ENCODE measurements at regions of chr11 and their contacts with region 1.

Region 1: GRCh38 chr11:85854557-85855340 is 434 bp upstream of the CCDC83 start:
- DNase-seq: peak; percentile 94
- ATAC-seq: peak; percentile 95
- H3K4me3 Mint-ChIP-seq: peak overlapping the region; percentile 90
- H3K27ac Mint-ChIP-seq: peak overlapping the region; percentile 93
- H3K4me1 Mint-ChIP-seq: peaks cover 16% of the 10 kb centered on the region
- H3K27me3 Mint-ChIP-seq: no peaks in the 10 kb centered on the region

Region 2: DNA sequence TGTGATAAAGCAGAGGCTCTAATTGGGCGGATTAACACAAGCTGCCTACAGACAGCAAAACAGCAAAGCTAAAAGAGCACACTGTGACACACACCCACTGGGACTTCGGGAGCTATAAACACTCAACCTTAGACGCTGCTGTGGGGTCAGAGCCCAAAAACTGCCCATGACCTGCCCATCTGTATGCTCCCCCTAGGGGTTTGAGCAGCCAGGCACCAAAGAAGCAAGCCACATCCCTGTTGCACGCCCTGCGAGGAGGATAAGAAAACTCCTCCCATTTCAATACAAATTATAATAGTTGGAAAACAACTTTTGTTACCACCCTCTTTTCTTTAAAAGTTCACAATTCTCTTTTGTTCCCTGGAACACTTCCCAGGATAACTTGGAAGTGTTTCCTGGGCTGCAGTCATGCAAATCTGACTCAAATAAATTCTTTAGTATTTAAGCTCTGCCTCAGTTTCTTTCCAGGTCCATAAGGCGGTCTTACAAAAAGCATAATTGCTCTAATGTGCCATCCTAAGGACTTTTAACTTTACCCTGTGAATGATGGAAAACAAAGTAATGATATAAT is 314.0 kb before region 1 on chr11:
- CTCF ChIA-PET with region 1: no interaction called
- DNase-seq: no peak
- ATAC-seq: no peak
- H3K4me3 Mint-ChIP-seq: no peak overlapping the region
- H3K27ac Mint-ChIP-seq: no peak overlapping the region
- H3K4me1 Mint-ChIP-seq: no peaks in the 10 kb centered on the region
- H3K27me3 Mint-ChIP-seq: peaks cover 3% of the 10 kb centered on the region

Region 3: GRCh38 chr11:85664615-85665481 is 189.9 kb before region 1 on chr11 and contains the start of gene CREBZF:
- CTCF ChIA-PET with region 1: interaction called, 12 read pairs
- DNase-seq: peak; percentile 96
- ATAC-seq: peak; percentile 74
- H3K4me3 Mint-ChIP-seq: peak within 1 kb of the TSS; percentile 97
- H3K27ac Mint-ChIP-seq: peak within 1 kb of the TSS; percentile 99
- H3K4me1 Mint-ChIP-seq: peaks cover 35% of the 10 kb centered on the region
- H3K27me3 Mint-ChIP-seq: no peaks in the 10 kb centered on the region
- total RNA-seq, gene CREBZF: 61.0 to 72.3 TPM

Region 4: DNA sequence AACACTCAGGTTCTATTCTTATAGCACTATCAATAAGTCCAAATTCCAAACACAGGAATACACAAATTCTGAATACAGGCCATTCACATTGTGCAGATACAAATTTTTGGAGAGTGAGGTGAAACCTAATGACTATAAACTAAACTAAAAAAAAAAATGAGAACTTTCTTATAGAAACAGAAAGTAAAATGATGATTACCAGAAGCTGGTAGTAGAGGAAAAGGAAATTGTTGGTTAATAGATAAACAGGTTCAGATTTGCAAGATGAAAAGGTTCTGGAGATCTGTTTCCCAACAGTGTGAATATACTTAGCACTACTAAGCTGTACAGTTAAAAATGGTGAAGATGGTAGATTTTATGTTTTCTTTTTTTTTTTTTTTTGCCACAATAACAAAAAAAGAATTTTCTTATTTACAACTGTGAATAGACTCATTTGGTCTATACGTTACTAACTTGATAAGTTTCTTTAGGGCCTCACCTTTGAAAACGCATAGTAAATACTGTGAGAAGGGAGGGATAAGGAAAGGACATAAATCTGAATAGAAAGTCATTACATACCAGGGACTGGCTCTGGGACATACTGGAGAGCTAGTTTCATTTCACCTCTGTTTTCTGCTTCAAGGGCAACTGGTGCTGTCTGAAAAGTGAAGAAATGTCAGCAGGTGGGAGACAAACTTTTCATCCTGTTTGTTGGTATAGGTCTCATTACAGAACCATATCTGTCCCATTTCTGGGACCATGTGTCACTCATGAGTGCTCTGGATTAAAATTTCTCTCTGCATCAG is 154.6 kb before region 1 on chr11:
- CTCF ChIA-PET with region 1: interaction called, 16 read pairs
- DNase-seq: no peak
- ATAC-seq: peak; percentile 78
- H3K4me3 Mint-ChIP-seq: peak overlapping the region; percentile 33
- H3K27ac Mint-ChIP-seq: peak overlapping the region; percentile 84
- H3K4me1 Mint-ChIP-seq: peaks cover 36% of the 10 kb centered on the region
- H3K27me3 Mint-ChIP-seq: no peaks in the 10 kb centered on the region

Region 5: GRCh38 chr11:85826116-85826855 is 28.5 kb before region 1 on chr11:
- CTCF ChIA-PET with region 1: interaction called, 21 read pairs
- DNase-seq: peak; percentile 51
- ATAC-seq: no peak
- H3K4me3 Mint-ChIP-seq: no peak overlapping the region
- H3K27ac Mint-ChIP-seq: peak overlapping the region; percentile 68
- H3K4me1 Mint-ChIP-seq: peaks cover 69% of the 10 kb centered on the region
- H3K27me3 Mint-ChIP-seq: no peaks in the 10 kb centered on the region

Region 6: GRCh38 chr11:86081455-86081854 is 226.7 kb after region 1 on chr11:
- CTCF ChIA-PET with region 1: no interaction called
- DNase-seq: no peak
- ATAC-seq: no peak
- H3K4me3 Mint-ChIP-seq: no peak overlapping the region
- H3K27ac Mint-ChIP-seq: no peak overlapping the region
- H3K4me1 Mint-ChIP-seq: no peaks in the 10 kb centered on the region
- H3K27me3 Mint-ChIP-seq: no peaks in the 10 kb centered on the region

Region 7: DNA sequence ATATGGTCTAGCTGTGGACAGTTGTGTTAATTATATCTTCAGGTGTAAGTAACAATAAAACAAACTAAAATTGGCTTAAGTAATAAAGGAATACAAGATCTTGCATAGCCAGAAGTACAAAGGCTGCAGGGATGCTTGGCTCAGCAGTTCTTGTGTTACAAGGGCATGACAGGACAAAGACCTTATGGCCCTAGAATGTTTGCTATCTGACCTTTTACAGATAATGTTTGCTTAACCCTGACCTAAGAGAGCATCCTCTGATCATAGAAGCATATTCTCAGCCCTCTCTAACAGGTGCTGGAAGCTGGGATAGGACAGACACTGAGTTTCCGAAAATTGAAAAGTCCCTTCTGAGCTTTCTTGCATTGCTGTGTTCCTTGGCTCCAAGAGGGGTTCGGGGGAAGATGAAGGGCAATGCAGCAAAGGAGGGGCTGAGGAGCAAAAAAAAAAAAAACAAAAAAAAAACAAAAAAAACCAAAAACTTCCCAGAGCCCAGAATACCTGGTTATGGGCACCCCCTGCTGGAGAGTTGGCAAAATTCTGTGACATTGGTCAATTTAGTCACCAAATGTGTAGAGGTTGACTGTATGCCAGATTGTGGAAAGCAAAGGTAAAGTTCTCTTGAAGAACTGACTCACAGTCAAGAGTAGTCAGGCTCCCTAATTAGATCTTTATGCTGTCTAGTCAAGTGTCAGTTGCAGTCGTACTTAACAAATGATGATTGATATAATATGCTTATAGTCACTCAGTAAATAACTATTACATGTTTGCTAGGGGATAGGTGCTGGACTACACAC is 436.9 kb after region 1 on chr11:
- CTCF ChIA-PET with region 1: interaction called, 10 read pairs
- DNase-seq: peak; percentile 78
- ATAC-seq: peak; percentile 17
- H3K4me3 Mint-ChIP-seq: no peak overlapping the region
- H3K27ac Mint-ChIP-seq: peak overlapping the region; percentile 78
- H3K4me1 Mint-ChIP-seq: peaks cover 61% of the 10 kb centered on the region
- H3K27me3 Mint-ChIP-seq: peaks cover 5% of the 10 kb centered on the region